IMR-90 (cell line): ENCODE measurements at regions of chr4 and their contacts with region 1.

Region 1: DNA sequence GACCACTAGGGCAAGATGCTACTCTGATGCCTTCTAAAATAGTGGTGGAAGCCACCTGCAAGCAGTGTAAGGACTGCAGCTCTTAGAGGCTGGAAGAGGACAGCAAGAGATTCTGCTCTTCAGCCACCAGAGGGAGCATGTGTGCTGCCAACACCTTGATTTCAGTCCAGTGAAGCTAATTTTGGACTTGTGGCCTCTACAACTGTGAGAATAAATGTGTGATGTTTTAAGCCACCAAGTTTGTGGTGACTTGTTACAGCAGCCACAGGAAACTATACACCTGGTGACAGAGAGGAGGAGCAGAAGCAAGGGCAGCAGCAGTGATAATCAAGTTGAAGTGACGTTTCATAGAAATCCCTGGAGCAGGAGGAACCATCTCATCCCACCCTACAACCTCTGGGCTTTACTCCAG is 55.9 kb downstream of the FGFBP1 start:
- DNase-seq: peak; percentile 82
- ATAC-seq: peak; percentile 96
- H3K4me3 ChIP-seq: no peak overlapping the region
- H3K27ac ChIP-seq: no peak overlapping the region
- H3K4me1 ChIP-seq: no peaks in the 10 kb centered on the region
- H3K27me3 ChIP-seq: peaks cover 18% of the 10 kb centered on the region
- CTCF ChIP-seq: peak; percentile 94
- POLR2A ChIP-seq: peak; percentile 36; the same call in 1 of the 2 replicates
- RAD21 ChIP-seq: peak; percentile 97

Region 2: GRCh38 chr4:15649914-15650545 is 232.7 kb before region 1 on chr4:
- CTCF ChIA-PET with region 1: no interaction called
- POLR2A ChIA-PET with region 1: no interaction called
- dilution Hi-C with region 1: no loop called
- in situ Hi-C with region 1: no loop called
- intact Hi-C with region 1: loop called (anchors 2 kb)
- DNase-seq: peak; percentile 63
- ATAC-seq: peak; percentile 25; the same call in 1 of the 2 replicates
- H3K4me3 ChIP-seq: no peak overlapping the region
- H3K27ac ChIP-seq: no peak overlapping the region
- H3K4me1 ChIP-seq: no peaks in the 10 kb centered on the region; the same call in 1 of the 2 replicates
- H3K27me3 ChIP-seq: no peaks in the 10 kb centered on the region
- CTCF ChIP-seq: peak; percentile 75
- POLR2A ChIP-seq: no peak
- RAD21 ChIP-seq: peak; percentile 76

Region 3: DNA sequence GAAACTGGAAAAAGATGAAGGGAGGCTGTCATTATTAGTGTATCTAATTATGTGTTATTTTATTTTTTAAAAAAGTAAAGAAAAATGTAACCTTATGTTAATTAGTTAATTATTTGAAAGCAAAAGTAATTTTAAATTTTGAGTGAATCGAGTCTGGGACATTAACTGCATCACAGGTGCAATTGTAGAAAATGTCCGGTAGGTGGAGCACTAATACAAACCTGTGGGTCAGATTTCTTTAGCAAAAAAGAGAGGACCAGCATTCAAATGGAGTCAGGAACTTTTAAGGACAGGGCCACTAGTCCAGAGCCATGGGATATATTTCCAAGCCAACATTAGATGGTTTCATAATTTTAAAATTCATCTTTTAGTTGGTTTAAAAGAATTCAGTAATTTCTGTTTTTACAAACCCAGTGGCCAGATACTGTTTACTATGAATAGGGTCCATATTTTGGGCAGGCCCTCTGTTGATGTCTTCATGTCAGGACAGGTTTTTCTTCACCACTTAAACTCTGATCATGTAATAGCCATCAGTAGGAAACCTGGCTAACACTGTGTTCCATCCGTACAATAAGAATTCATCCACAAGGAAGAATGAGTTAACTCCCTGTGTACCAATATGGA is 152.7 kb before region 1 on chr4:
- CTCF ChIA-PET with region 1: no interaction called
- POLR2A ChIA-PET with region 1: no interaction called
- dilution Hi-C with region 1: no loop called
- in situ Hi-C with region 1: loop called (anchors 10 kb)
- intact Hi-C with region 1: loop called (anchors 5 kb)
- DNase-seq: peak; percentile 53
- ATAC-seq: peak; percentile 88
- H3K4me3 ChIP-seq: no peak overlapping the region
- H3K27ac ChIP-seq: no peak overlapping the region
- H3K4me1 ChIP-seq: 0 out of 2 replicates have a peak, but pooled peaks cover 2% of the 10 kb centered on the region
- H3K27me3 ChIP-seq: no peaks in the 10 kb centered on the region
- CTCF ChIP-seq: peak; percentile 83
- POLR2A ChIP-seq: no peak
- RAD21 ChIP-seq: peak; percentile 69

Region 4: DNA sequence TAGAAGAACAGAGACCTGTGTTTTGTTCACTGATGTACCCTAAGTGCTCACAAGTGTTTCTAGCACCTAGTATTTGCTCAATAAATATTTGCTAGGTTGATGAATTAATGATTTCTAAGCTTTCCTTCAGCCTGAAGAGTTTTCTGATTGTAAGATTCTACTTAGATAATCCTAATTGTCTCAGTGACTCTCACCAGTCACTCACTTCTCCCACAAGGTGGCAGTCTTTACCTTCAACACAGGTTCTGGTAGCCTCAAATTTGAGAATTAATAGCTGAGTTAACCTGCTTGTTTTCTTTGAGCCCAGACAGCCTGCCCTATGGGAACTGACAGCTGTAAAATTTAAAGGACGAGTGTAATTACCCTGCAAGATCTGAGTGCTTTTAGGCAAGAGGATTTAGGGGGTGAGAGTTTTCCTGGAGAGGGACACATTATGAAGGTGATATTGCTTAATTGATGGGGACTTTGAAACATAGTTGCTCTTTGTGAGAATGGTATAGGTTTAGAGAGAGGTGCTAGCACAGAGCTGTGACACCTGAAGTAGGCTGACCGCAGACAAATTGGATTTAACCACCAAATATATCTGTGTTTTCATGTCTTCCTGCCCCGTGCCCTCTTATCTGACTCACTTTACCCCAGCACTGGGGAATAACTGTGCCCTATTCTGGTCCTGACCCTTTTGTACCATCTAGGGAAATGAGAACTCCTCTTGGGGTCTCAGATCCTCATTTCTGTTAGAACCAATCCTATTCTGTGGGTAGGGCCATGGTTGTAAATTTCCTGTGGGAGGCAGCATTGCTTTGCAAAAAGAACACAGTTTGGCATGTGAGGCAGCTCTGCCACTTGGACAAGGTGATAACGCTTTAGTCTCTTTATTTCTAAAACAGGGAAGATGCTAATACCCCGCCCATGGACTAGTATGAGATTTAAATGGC is 76.8 kb before region 1 on chr4:
- CTCF ChIA-PET with region 1: interaction called, 18 read pairs
- POLR2A ChIA-PET with region 1: no interaction called
- dilution Hi-C with region 1: no loop called
- in situ Hi-C with region 1: no loop called
- intact Hi-C with region 1: loop called (anchors 1 kb)
- DNase-seq: peak; percentile 63
- ATAC-seq: peak; percentile 84
- H3K4me3 ChIP-seq: no peak overlapping the region
- H3K27ac ChIP-seq: no peak overlapping the region
- H3K4me1 ChIP-seq: no peaks in the 10 kb centered on the region
- H3K27me3 ChIP-seq: peaks cover 27% of the 10 kb centered on the region
- CTCF ChIP-seq: peak; percentile 83
- POLR2A ChIP-seq: no peak
- RAD21 ChIP-seq: peak; percentile 84

Region 5: GRCh38 chr4:15956179-15956850 is 73.6 kb after region 1 on chr4:
- CTCF ChIA-PET with region 1: interaction called, 67 read pairs
- POLR2A ChIA-PET with region 1: no interaction called
- dilution Hi-C with region 1: no loop called
- in situ Hi-C with region 1: loop called (anchors 5 kb)
- intact Hi-C with region 1: loop called (anchors 1 kb)
- DNase-seq: peak; percentile 45
- ATAC-seq: peak; percentile 91
- H3K4me3 ChIP-seq: no peak overlapping the region
- H3K27ac ChIP-seq: no peak overlapping the region
- H3K4me1 ChIP-seq: no peaks in the 10 kb centered on the region
- H3K27me3 ChIP-seq: peaks cover 14% of the 10 kb centered on the region
- CTCF ChIP-seq: peak; percentile 96
- POLR2A ChIP-seq: no peak
- RAD21 ChIP-seq: peak; percentile 98

Region 6: GRCh38 chr4:16001484-16001858 is 118.8 kb after region 1 on chr4:
- CTCF ChIA-PET with region 1: interaction called, 8 read pairs
- POLR2A ChIA-PET with region 1: no interaction called
- dilution Hi-C with region 1: no loop called
- in situ Hi-C with region 1: no loop called
- intact Hi-C with region 1: loop called (anchors 1 kb)
- DNase-seq: peak; percentile 72
- ATAC-seq: peak; percentile 99
- H3K4me3 ChIP-seq: no peak overlapping the region
- H3K27ac ChIP-seq: no peak overlapping the region
- H3K4me1 ChIP-seq: no peaks in the 10 kb centered on the region
- H3K27me3 ChIP-seq: peaks cover 17% of the 10 kb centered on the region
- CTCF ChIP-seq: peak; percentile 91
- POLR2A ChIP-seq: no peak
- RAD21 ChIP-seq: peak; percentile 95

Region 7: DNA sequence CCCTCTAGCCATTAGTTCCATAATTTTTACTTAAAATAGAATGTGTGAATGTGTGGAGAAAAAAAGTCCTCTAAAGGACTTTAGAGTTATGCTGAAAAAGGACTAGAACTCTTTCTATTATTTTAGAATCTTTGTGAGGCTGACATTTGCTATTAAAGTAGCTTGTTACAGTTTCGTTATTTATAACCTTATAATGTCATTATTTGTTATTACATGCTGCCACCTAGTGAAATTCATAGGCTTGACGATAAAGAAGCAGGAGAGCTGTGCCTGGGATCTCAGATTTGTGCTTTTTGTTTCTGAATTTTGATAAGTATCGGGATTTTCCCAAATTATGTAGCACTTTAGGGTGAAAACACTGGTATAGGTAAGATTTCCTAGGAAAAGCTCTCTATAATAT is 382.1 kb after region 1 on chr4:
- CTCF ChIA-PET with region 1: interaction called, 3 read pairs
- POLR2A ChIA-PET with region 1: no interaction called
- dilution Hi-C with region 1: no loop called
- in situ Hi-C with region 1: no loop called
- intact Hi-C with region 1: loop called (anchors 5 kb)
- DNase-seq: peak; percentile 58
- ATAC-seq: peak; percentile 82
- H3K4me3 ChIP-seq: no peak overlapping the region
- H3K27ac ChIP-seq: no peak overlapping the region
- H3K4me1 ChIP-seq: no peaks in the 10 kb centered on the region
- H3K27me3 ChIP-seq: peaks cover 7% of the 10 kb centered on the region
- CTCF ChIP-seq: peak; percentile 66
- POLR2A ChIP-seq: no peak
- RAD21 ChIP-seq: peak; percentile 72